ENCODE measurements at regions of chr4 and their contacts with region 1.

Region 1: GRCh38 chr4:81351654-81352445 is 119.9 kb downstream of the RASGEF1B start:
- DNase-seq: peak; percentile 8
- ATAC-seq: peak; percentile 93
- H3K4me3 ChIP-seq: no peak overlapping the region
- H3K27ac ChIP-seq: no peak overlapping the region
- H3K4me1 ChIP-seq: no peaks in the 10 kb centered on the region
- H3K27me3 ChIP-seq: no peaks in the 10 kb centered on the region
- CTCF ChIP-seq: peak; percentile 84 to 95 (median 85)
- EP300 ChIP-seq: no peak
- POLR2A ChIP-seq: no peak
- RAD21 ChIP-seq: peak; percentile 82

Region 2: DNA sequence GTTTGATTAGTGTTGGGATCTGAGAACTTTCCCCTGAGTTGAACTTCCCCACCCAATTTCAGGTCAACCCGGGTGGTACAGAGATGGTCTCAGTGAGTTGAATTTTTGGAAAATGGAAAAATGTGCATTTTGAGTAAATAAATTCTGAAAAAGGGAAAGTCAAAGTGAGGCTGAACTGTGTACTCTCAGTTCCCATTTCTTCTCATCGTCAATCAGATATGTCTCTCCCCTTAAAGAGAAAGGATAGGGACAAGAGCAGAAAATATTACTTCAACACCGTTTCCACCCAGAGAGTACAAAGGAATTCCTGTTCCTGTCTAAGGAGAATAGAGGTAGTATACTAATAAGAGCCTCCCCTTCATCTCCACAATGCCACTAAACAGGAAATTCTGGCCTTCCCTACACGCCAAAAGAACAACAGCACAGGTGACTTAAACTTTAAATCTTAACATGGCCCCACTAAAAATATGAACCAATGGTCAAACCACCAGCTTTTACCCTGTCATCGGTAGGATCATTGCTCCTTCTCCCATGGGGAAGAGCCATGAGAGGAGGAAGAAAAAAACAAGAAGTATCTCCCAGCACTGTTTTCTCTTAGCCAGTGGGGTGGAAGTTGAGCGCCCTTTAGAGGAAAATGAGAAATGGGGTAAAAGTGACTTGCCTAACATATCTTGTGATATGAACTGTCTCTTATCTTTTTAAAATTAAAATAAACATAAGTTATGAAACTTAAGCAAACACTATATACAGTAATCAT is 291.1 kb before region 1 on chr4:
- CTCF ChIA-PET with region 1: interaction called, 7 read pairs
- POLR2A ChIA-PET with region 1: no interaction called
- RAD21 ChIA-PET with region 1: no interaction called
- SMC1A ChIA-PET with region 1: interaction called, 3 read pairs
- in situ Hi-C with region 1: loop called (anchors 5 kb)
- intact Hi-C with region 1: no loop called
- DNase-seq: no peak
- ATAC-seq: peak; percentile 74
- H3K4me3 ChIP-seq: no peak overlapping the region
- H3K27ac ChIP-seq: no peak overlapping the region
- H3K4me1 ChIP-seq: no peaks in the 10 kb centered on the region; the same call in 1 of the 2 replicates
- H3K27me3 ChIP-seq: no peaks in the 10 kb centered on the region
- CTCF ChIP-seq: no peak
- EP300 ChIP-seq: no peak
- POLR2A ChIP-seq: no peak
- RAD21 ChIP-seq: no peak

Region 3: DNA sequence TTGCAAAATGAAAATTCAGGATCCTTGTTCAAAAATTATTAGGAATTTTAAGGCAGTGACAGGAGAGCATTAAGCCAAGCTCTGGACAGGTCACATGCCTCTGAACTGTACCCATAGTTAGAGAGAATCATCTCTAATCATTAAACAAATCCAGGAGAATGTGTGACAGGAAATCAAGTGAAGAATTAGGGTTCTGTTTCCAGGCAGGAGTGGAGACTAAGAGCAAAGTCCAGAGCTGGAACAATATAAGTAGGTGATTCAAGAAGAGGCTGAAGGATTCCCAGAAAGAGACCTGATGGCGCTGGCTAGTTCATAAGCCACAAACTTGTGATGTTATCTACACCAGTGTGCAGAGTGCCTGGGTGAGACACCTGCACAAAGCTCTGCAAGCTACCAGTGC is 32.2 kb before region 1 on chr4:
- CTCF ChIA-PET with region 1: interaction called, 14 read pairs
- POLR2A ChIA-PET with region 1: no interaction called
- RAD21 ChIA-PET with region 1: no interaction called
- SMC1A ChIA-PET with region 1: interaction called, 3 read pairs
- in situ Hi-C with region 1: no loop called
- intact Hi-C with region 1: no loop called
- DNase-seq: no peak
- ATAC-seq: no peak
- H3K4me3 ChIP-seq: no peak overlapping the region
- H3K27ac ChIP-seq: no peak overlapping the region
- H3K4me1 ChIP-seq: no peaks in the 10 kb centered on the region
- H3K27me3 ChIP-seq: no peaks in the 10 kb centered on the region
- CTCF ChIP-seq: no peak
- EP300 ChIP-seq: no peak
- POLR2A ChIP-seq: no peak
- RAD21 ChIP-seq: no peak